HepG2 (cell line): ENCODE measurements at regions of chrX and their contacts with region 1.

Region 1: GRCh38 chrX:40266490-40267333 is 169.0 kb upstream of the BCOR start:
- DNase-seq: peak; percentile 23
- ATAC-seq: peak; percentile 92
- H3K4me3 ChIP-seq: peak overlapping the region; percentile 45 to 69 (median 60); a peak in 5 of 6 replicates
- H3K27ac ChIP-seq: no peak overlapping the region
- H3K4me1 ChIP-seq: peaks cover 29% of the 10 kb centered on the region
- H3K27me3 ChIP-seq: no peaks in the 10 kb centered on the region; a peak in 1 of 5 replicates
- CTCF ChIP-seq: peak; percentile 83
- EP300 ChIP-seq: no peak
- POLR2A ChIP-seq: no peak
- RAD21 ChIP-seq: peak; percentile 93

Region 2: DNA sequence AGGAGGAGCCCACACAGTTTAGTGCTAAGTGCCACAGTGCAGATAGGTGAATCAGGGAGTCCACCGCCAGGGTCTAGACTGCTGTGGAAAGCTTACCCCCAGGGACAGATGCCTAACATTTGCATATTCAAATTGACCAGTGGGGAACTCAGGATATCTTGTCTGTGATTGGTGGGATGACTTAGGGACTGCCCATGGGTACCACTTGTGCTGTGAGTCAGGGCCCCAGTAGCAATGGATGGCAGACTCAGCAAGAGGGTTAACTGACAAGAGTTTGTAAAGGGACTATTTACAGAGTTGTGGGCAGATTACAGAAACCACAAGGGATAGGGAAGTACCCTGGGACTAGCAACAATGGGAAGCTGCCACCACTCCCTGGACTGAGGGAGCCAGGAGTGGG is 451.1 kb before region 1 on chrX:
- CTCF ChIA-PET with region 1: no interaction called
- POLR2A ChIA-PET with region 1: no interaction called
- in situ Hi-C with region 1: no loop called
- intact Hi-C with region 1: loop called (anchors 2 kb)
- DNase-seq: no peak
- ATAC-seq: no peak
- H3K4me3 ChIP-seq: no peak overlapping the region
- H3K27ac ChIP-seq: no peak overlapping the region
- H3K4me1 ChIP-seq: peaks cover 11% of the 10 kb centered on the region; the same call in 1 of the 2 replicates
- H3K27me3 ChIP-seq: peaks cover 0 to 2% of the 10 kb centered on the region in 2 experiments; a peak in 2 of 5 replicates
- CTCF ChIP-seq: no peak
- EP300 ChIP-seq: no peak
- POLR2A ChIP-seq: no peak
- RAD21 ChIP-seq: no peak

Region 3: GRCh38 chrX:39936886-39937770 is 329.6 kb before region 1 on chrX:
- CTCF ChIA-PET with region 1: no interaction called
- POLR2A ChIA-PET with region 1: no interaction called
- in situ Hi-C with region 1: loop called (anchors 25 kb)
- intact Hi-C with region 1: loop called (anchors 5 kb)
- DNase-seq: no peak
- ATAC-seq: no peak
- H3K4me3 ChIP-seq: peak overlapping the region in 2 of 3 experiments; percentile 12 to 46; a peak in 1 of 6 replicates
- H3K27ac ChIP-seq: no peak overlapping the region
- H3K4me1 ChIP-seq: peaks cover 24% of the 10 kb centered on the region
- H3K27me3 ChIP-seq: no peaks in the 10 kb centered on the region
- CTCF ChIP-seq: no peak
- EP300 ChIP-seq: no peak
- POLR2A ChIP-seq: no peak
- RAD21 ChIP-seq: no peak

Region 4: GRCh38 chrX:40083120-40083978 is 183.4 kb before region 1 on chrX:
- CTCF ChIA-PET with region 1: no interaction called
- POLR2A ChIA-PET with region 1: interaction called, 3 read pairs
- in situ Hi-C with region 1: loop called (anchors 10 kb)
- intact Hi-C with region 1: no loop called
- DNase-seq: no peak
- ATAC-seq: peak; percentile 58
- H3K4me3 ChIP-seq: peak overlapping the region; percentile 50 to 67 (median 52); a peak in 5 of 6 replicates
- H3K27ac ChIP-seq: peak overlapping the region; percentile 76
- H3K4me1 ChIP-seq: peaks cover 72% of the 10 kb centered on the region
- H3K27me3 ChIP-seq: no peaks in the 10 kb centered on the region
- CTCF ChIP-seq: no peak
- EP300 ChIP-seq: no peak
- POLR2A ChIP-seq: no peak
- RAD21 ChIP-seq: no peak

Region 5: DNA sequence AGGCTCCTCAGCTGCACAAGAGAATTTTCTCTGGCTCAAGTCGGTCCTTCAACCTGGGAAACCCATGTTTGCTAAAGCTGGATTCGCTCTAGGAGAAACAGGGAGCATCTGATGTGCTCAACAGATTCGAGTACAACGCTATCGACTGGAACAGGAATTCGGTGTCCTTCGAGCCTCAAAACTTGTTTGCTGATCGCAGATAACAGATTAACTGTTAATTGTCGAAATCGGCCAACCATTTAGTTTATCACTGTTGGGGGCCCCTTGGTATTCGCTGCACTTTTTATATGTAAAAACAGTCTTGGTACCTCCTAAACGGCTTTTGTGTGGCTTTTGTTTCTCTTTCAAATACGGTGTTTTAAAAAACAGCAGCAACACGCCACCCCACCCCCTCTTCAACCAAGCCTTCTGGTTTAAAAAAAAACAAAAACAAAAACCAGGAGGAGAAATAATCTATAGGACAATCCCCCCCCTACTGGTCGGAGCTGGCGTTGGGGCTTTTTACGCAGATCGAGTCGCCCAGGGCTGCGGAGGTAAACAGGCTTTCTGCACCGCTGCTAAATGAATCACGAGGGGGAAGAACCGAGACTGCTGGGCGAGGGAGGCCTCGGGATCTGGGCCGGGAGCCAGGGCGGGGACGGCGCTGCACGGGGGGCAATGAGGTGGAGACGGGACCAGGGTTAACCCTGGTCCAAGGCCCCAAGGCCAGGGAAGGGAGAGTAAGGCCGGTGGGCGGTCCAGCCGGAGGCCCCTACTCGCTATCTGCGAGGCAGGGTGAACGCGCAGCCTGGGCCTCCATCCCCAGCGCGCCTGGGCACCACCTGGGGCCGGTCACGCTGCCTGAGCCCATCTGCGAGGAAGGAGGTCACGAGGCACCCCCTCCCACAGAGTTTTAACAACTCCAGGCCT is 97.3 kb before region 1 on chrX:
- CTCF ChIA-PET with region 1: no interaction called
- POLR2A ChIA-PET with region 1: no interaction called
- in situ Hi-C with region 1: no loop called
- intact Hi-C with region 1: loop called (anchors 5 kb)
- DNase-seq: peak; percentile 70
- ATAC-seq: peak; percentile 59
- H3K4me3 ChIP-seq: peak overlapping the region; percentile 12 to 30 (median 28); a peak in 5 of 6 replicates
- H3K27ac ChIP-seq: peak overlapping the region; percentile 67
- H3K4me1 ChIP-seq: peaks cover 92% of the 10 kb centered on the region
- H3K27me3 ChIP-seq: no peaks in the 10 kb centered on the region
- CTCF ChIP-seq: peak; percentile 58
- EP300 ChIP-seq: no peak; a peak in 1 of 4 replicates
- POLR2A ChIP-seq: no peak
- RAD21 ChIP-seq: peak; percentile 38; the same call in 1 of the 2 replicates